MCF 10A (cell line): ENCODE measurements at regions of chr6 and their contacts with region 1.

Region 1: GRCh38 chr6:47047479-47048407 is 5.6 kb upstream of the ADGRF1 start:
- DNase-seq: peak; percentile 79
- H3K4me3 Mint-ChIP-seq: no peak overlapping the region
- H3K27ac Mint-ChIP-seq: peak overlapping the region; percentile 5
- H3K4me1 Mint-ChIP-seq: peaks cover 31% of the 10 kb centered on the region
- H3K27me3 Mint-ChIP-seq: no peaks in the 10 kb centered on the region
- CTCF ChIP-seq: peak; percentile 74

Region 2: GRCh38 chr6:46704562-46704961 is 343.2 kb before region 1 on chr6:
- CTCF ChIA-PET with region 1: interaction called, 4 read pairs
- POLR2A ChIA-PET with region 1: no interaction called
- intact Hi-C with region 1: loop called (anchors 1 kb)
- DNase-seq: peak; percentile 53
- H3K4me3 Mint-ChIP-seq: no peak overlapping the region
- H3K27ac Mint-ChIP-seq: no peak overlapping the region
- H3K4me1 Mint-ChIP-seq: peaks cover 1% of the 10 kb centered on the region
- H3K27me3 Mint-ChIP-seq: no peaks in the 10 kb centered on the region
- CTCF ChIP-seq: peak; percentile 38

Region 3: GRCh38 chr6:46781478-46782378 is 266.0 kb before region 1 on chr6:
- CTCF ChIA-PET with region 1: no interaction called
- POLR2A ChIA-PET with region 1: no interaction called
- intact Hi-C with region 1: loop called (anchors 10 kb)
- DNase-seq: peak; percentile 78
- H3K4me3 Mint-ChIP-seq: no peak overlapping the region
- H3K27ac Mint-ChIP-seq: no peak overlapping the region
- H3K4me1 Mint-ChIP-seq: no peaks in the 10 kb centered on the region
- H3K27me3 Mint-ChIP-seq: peaks cover 10% of the 10 kb centered on the region
- CTCF ChIP-seq: peak; percentile 53

Region 4: GRCh38 chr6:46862381-46862780 is 185.4 kb before region 1 on chr6:
- CTCF ChIA-PET with region 1: interaction called, 24 read pairs
- POLR2A ChIA-PET with region 1: interaction called, 3 read pairs
- intact Hi-C with region 1: no loop called
- DNase-seq: no peak
- H3K4me3 Mint-ChIP-seq: no peak overlapping the region
- H3K27ac Mint-ChIP-seq: no peak overlapping the region
- H3K4me1 Mint-ChIP-seq: no peaks in the 10 kb centered on the region
- H3K27me3 Mint-ChIP-seq: no peaks in the 10 kb centered on the region
- CTCF ChIP-seq: no peak

Region 5: GRCh38 chr6:46993846-46994245 is 53.9 kb before region 1 on chr6:
- CTCF ChIA-PET with region 1: interaction called, 20 read pairs
- POLR2A ChIA-PET with region 1: interaction called, 4 read pairs
- intact Hi-C with region 1: loop called (anchors 1 kb)
- DNase-seq: peak; percentile 81
- H3K4me3 Mint-ChIP-seq: no peak overlapping the region
- H3K27ac Mint-ChIP-seq: peak overlapping the region; percentile 82
- H3K4me1 Mint-ChIP-seq: peaks cover 34% of the 10 kb centered on the region
- H3K27me3 Mint-ChIP-seq: no peaks in the 10 kb centered on the region
- CTCF ChIP-seq: no peak

Region 6: DNA sequence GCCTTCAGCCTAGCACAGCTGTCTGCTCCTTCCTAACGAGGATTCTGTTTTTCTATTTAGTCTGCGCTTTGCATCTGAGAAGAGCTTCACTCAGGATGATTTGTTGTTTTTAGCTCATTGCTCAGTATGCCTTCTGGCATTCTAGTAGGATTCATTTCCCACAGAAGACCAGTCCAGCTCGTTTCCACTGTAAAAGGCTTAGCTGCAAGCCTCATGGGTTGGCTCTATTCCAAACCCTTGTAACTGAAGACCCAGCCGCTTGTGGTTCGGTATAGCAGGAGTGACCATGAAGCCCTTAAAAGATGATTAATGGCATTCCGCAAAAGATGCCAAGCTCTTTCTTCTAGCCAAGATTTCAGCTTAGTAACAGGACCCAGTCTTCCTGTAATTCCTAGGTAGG is 12.8 kb before region 1 on chr6:
- CTCF ChIA-PET with region 1: interaction called, 19 read pairs
- POLR2A ChIA-PET with region 1: interaction called, 26 read pairs
- intact Hi-C with region 1: no loop called
- DNase-seq: peak; percentile 98
- H3K4me3 Mint-ChIP-seq: peak overlapping the region; percentile 51
- H3K27ac Mint-ChIP-seq: peak overlapping the region; percentile 6
- H3K4me1 Mint-ChIP-seq: peaks cover 31% of the 10 kb centered on the region
- H3K27me3 Mint-ChIP-seq: no peaks in the 10 kb centered on the region
- CTCF ChIP-seq: no peak

Region 7: DNA sequence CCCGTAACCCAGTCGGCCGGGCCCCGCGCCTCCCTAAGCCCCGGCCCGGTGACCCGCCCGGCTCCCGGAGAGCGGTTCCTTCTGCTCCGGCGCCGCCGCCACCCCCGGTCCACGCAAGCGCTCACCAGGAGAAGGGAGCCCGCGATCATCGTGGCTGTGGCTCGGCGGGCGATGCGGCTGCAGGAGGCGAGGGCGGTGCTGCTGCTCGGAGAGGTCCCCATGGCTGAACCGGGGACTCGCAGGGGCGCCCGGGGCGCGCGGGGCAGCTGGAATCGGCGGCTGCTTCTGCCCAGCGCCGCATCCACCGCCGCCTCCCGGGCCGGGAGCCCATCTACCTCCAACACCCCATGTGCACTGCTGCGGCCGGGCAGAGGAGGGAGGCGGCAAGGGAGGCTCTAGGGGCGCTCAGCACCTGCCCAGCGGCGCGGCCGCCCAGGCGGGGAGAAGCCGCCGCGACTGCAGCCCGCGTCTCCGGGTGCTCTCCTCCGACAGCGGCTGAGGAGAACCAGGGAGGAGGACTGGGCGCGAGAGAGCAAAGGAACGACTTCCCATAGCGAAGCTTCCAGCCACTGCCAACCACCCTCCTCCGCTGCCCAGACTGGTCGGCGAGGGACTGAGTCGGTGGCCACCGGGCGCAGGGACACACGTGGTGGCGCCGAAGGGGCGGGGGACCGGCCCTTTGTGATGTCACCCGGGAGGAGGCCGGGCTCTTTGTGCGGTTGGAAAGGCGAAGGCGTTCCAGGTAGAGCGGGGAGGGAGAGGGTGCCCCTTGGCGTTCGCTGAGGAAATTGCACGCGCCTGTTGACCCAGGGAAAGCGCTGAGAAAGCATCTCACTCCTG is 261.8 kb after region 1 on chr6 and contains the start of gene TNFRSF21:
- CTCF ChIA-PET with region 1: interaction called, 3 read pairs
- POLR2A ChIA-PET with region 1: interaction called, 3 read pairs
- intact Hi-C with region 1: loop called (anchors 1 kb)
- DNase-seq: peak; percentile 91
- H3K4me3 Mint-ChIP-seq: peak within 1 kb of the TSS; percentile 89
- H3K27ac Mint-ChIP-seq: peak within 1 kb of the TSS; percentile 77
- H3K4me1 Mint-ChIP-seq: peaks cover 12% of the 10 kb centered on the region
- H3K27me3 Mint-ChIP-seq: no peaks in the 10 kb centered on the region
- CTCF ChIP-seq: peak; percentile 90
- total RNA-seq, gene TNFRSF21: 17.8 and 19.3 TPM in 2 replicates